A673 (cell line): ENCODE measurements at regions of chr3 and their contacts with region 1.

Region 1: GRCh38 chr3:32296256-32297204 is 58.0 kb downstream of the CMTM8 start:
- DNase-seq: peak; percentile 67
- H3K4me3 ChIP-seq: no peak overlapping the region
- H3K27ac ChIP-seq: no peak overlapping the region
- H3K4me1 ChIP-seq: no peaks in the 10 kb centered on the region
- H3K27me3 ChIP-seq: no peaks in the 10 kb centered on the region
- CTCF ChIP-seq: peak; percentile 87

Region 2: DNA sequence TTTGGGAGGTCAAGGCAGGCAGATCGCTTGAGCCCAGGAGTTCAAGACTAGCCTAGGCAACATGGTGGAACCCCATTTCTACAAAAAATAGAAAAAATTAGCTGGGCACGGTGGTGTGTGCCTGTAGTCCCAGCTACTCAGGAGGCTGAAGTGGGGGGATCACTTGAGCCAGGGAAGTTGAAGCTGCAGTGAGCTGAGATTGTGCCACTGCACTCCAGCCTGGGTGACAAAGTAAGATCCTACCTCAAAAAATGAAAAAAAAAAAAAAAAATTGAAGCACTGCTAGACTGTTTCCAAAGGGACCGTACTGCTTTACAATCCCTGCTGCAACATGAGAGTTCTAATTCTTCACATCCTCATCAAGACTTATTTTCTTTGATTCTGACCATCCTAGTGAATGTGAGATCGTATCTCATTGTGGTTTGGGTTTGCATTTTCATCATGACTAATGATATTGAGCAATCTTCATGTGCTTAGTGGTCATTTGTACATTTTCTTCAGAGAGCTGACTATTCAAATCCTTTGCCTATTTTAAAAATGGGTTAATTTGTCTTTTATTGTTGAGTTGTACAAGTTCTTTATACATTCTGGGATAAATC is 47.2 kb before region 1 on chr3:
- CTCF ChIA-PET with region 1: interaction called, 10 read pairs
- POLR2A ChIA-PET with region 1: no interaction called
- intact Hi-C with region 1: no loop called
- DNase-seq: no peak
- H3K4me3 ChIP-seq: no peak overlapping the region
- H3K27ac ChIP-seq: no peak overlapping the region
- H3K4me1 ChIP-seq: no peaks in the 10 kb centered on the region
- H3K27me3 ChIP-seq: no peaks in the 10 kb centered on the region
- CTCF ChIP-seq: no peak

Region 3: DNA sequence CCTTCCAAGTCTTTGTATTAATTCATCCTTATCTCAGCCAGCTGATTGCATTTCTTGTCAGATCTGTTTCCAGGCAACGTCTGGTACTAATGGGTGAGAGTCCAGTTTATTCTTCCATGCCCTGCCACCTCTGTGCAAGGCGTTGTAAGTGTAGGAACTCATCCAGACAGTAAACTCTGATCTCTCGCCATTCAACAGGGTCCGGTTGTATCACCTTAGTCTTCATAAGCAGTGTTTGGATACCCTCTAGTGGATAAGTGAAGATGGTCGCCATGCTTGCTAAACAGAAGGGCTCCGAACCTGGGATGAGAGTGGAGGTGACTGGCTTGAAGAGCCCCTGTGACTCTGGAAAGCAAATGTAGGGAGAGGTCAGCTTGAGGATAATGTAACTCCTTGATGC is 43.5 kb after region 1 on chr3:
- CTCF ChIA-PET with region 1: no interaction called
- POLR2A ChIA-PET with region 1: no interaction called
- intact Hi-C with region 1: loop called (anchors 5 kb)
- DNase-seq: peak; percentile 50
- H3K4me3 ChIP-seq: no peak overlapping the region
- H3K27ac ChIP-seq: no peak overlapping the region
- H3K4me1 ChIP-seq: no peaks in the 10 kb centered on the region
- H3K27me3 ChIP-seq: no peaks in the 10 kb centered on the region
- CTCF ChIP-seq: peak; percentile 53

Region 4: DNA sequence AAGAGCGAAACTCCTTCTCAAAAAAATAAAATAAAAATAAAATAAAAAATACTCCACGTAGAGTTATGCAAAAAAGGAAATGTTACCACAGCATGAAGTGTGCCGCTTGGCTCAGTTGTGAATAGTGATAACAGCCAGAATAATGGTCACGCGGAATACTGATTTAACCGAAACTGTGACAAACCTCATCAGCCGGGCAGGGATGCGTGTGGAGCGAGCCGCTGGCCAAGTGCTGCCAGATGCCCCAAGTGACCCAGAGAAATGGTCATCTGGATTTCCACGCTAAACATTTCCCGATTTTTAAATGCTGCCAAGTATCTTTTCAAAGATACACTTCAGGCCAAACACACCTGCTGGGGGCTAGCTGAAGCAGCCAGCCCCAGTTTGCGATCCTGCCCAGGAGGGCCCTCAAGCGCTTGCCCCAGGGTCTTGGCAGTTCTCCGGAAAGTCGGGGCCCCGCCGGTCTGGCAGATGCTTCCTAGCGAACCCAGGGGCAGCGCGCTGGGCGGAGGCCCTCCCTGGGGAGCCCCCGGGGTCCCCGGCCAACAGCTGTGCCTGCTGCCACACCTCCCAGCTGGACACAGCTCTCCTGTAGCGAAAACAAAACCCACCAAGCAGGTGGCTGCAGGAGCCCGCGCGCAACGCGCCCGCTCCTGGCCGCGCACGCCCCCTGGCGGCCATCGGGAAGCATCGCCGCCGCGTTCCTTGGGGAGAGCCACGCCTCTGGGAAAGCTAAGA is 171.0 kb after region 1 on chr3:
- CTCF ChIA-PET with region 1: interaction called, 5 read pairs
- POLR2A ChIA-PET with region 1: no interaction called
- intact Hi-C with region 1: loop called (anchors 5 kb)
- DNase-seq: peak; percentile 73
- H3K4me3 ChIP-seq: peak overlapping the region; percentile 35
- H3K27ac ChIP-seq: no peak overlapping the region
- H3K4me1 ChIP-seq: no peaks in the 10 kb centered on the region
- H3K27me3 ChIP-seq: no peaks in the 10 kb centered on the region
- CTCF ChIP-seq: peak; percentile 98